CD8-positive, alpha-beta memory T cell (primary cell): ENCODE measurements at regions of chr17 and their contacts with region 1.

Region 1: DNA sequence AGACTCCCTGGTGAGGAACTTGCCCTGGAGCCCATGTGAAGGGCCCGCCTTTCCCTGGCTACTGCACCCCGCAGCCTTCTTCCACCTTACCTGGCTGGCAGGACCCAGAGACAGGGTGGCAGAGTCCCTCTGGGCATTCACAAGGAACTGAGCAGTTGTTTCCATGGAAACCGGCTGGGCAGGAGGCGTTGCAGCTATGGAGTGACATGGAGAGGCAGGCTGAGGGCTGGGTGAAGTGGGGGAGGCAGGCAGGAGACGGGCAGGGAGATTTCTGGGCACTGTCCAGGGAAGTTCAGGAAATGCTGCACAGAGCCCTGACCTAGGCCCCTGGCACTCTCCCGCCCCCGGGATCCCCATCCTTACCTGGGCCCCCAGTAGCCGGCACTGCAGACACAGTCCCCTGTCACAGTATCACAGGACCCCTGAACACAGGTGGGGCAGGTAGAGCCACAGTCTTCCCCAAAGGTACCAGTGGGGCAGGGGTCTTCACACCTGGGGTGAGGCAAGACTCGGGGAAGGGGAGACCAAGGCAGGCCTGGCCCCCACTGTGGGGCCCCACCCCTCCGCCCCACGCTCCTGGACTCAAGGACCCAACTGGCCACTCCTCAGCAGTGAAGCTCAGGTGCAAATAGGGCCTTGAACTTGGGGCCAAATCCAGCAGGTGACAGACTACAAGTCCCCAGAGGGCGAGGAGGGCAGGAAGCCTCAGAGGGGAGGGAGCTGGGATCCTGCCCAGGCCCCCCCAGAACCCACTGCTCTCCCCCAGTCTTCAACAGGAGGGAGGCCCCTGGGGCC is 5.8 kb downstream of the SCARF1 start:
- DNase-seq: no peak
- H3K4me3 ChIP-seq: no peak overlapping the region
- H3K4me3 Mint-ChIP-seq: no peak overlapping the region
- H3K27ac ChIP-seq: no peak overlapping the region
- H3K27ac Mint-ChIP-seq: no peak overlapping the region
- H3K4me1 ChIP-seq: peaks cover 10% of the 10 kb centered on the region
- H3K4me1 Mint-ChIP-seq: peaks cover 7 to 9% (median 9%) of the 10 kb centered on the region in 3 donors
- H3K27me3 ChIP-seq: no peaks in the 10 kb centered on the region
- H3K27me3 Mint-ChIP-seq: no peaks in the 10 kb centered on the region

Region 2: GRCh38 chr17:1561400-1562175 is 78.2 kb before region 1 on chr17:
- CTCF ChIA-PET with region 1: no interaction called
- POLR2A ChIA-PET with region 1: no interaction called
- DNase-seq: peak in 4 of 5 donors; percentile 19 to 45 (median 24)
- H3K4me3 ChIP-seq: peak overlapping the region; percentile 55
- H3K4me3 Mint-ChIP-seq: peak overlapping the region; percentile 78 to 91 (median 84)
- H3K27ac ChIP-seq: peak overlapping the region; percentile 16
- H3K27ac Mint-ChIP-seq: peak overlapping the region in 7 of 8 donors; percentile 59 to 88 (median 84)
- H3K4me1 ChIP-seq: peaks cover 22% of the 10 kb centered on the region
- H3K4me1 Mint-ChIP-seq: peaks cover 37 to 59% (median 38%) of the 10 kb centered on the region in 3 donors
- H3K27me3 ChIP-seq: no peaks in the 10 kb centered on the region
- H3K27me3 Mint-ChIP-seq: peaks cover 0 to 4% of the 10 kb centered on the region in 2 donors

Region 3: DNA sequence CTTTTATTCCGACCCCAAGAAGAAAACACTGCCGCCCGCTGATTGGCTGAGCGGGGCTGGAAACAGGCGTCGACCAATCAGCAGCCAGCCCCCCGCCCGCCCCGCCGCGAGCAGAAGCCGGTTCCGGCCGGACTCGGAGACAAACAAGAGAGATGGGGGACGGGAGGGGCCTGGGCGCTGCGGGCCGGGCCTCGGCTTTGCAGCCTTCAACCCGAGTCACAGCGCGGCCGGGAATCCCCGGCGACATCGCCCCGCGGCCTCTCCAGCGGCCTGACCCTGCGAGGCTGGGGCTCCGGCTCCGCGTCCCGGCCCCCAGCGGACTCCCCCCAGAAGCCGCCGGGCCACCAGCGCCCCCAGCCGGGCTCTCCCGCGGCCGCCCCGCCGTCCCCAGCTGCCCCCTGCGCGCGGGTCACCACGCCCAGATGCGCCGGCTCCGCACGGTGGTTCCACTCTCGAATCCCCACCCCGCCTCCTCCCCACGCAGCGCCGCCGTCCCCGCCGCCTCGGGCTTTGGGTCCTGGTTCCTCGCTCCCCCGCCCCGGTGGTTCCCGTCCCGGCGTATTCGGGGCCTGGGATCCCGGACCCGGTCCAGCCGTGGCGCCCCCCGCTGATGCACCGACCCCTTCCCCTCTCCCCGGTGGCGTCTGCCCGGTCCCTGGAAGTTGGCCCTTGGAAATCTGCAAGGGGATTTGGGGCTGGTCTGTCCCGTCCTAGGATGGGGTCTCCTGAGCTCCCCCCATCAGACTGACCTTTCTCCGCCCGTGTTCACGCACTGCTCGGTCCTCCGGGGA is 10.7 kb before region 1 on chr17:
- CTCF ChIA-PET with region 1: interaction called, 10 read pairs
- POLR2A ChIA-PET with region 1: interaction called, 7 read pairs
- DNase-seq: peak; percentile 83 to 94 (median 86)
- H3K4me3 ChIP-seq: peak overlapping the region; percentile 77
- H3K4me3 Mint-ChIP-seq: peak overlapping the region; percentile 91 to 97 (median 94)
- H3K27ac ChIP-seq: peak overlapping the region; percentile 69
- H3K27ac Mint-ChIP-seq: peak overlapping the region; percentile 75 to 94 (median 86)
- H3K4me1 ChIP-seq: peaks cover 17% of the 10 kb centered on the region
- H3K4me1 Mint-ChIP-seq: peaks cover 10 to 24% (median 11%) of the 10 kb centered on the region in 3 donors
- H3K27me3 ChIP-seq: no peaks in the 10 kb centered on the region
- H3K27me3 Mint-ChIP-seq: peaks cover 0 to 4% of the 10 kb centered on the region in 2 donors